ENCODE measurements at regions of chr5 and their contacts with region 1.

Region 1: DNA sequence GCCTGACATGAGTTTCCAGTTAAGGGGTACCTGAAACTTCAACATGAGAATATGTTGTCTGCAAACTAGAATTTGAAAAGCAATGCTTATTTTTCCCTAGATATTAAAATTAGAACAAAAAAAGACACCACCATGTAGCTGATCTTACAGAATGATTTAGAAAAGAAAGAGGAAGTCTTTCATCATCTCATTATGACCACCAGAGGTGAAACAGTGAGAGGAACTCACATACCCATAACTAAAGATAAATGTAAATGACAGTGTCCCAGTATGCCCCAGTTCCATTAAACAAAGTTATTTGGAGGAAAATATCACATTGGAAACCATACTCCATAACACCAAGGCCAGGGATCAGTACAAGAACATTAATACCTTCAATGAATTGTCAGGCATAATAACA is 6.9 kb downstream of the TAF7 start:
- DNase-seq: no peak
- ATAC-seq: no peak
- H3K4me3 ChIP-seq: no peak overlapping the region
- H3K27ac ChIP-seq: no peak overlapping the region
- H3K4me1 ChIP-seq: peaks cover 0 to 8% (median 0%) of the 10 kb centered on the region in 9 donors
- H3K27me3 ChIP-seq: no peaks in the 10 kb centered on the region
- CTCF ChIP-seq: no peak

Region 2: GRCh38 chr5:141001854-141002604 is 311.7 kb before region 1 on chr5:
- intact Hi-C with region 1: no loop called
- DNase-seq: no peak
- ATAC-seq: peak in 2 of 8 donors; percentile 34 to 44
- H3K4me3 ChIP-seq: peak overlapping the region in 6 of 10 donors; percentile 24 to 42 (median 36)
- H3K27ac ChIP-seq: no peak overlapping the region
- H3K4me1 ChIP-seq: peaks cover 0 to 12% (median 5%) of the 10 kb centered on the region in 9 donors
- H3K27me3 ChIP-seq: peaks cover 0 to 65% (median 41%) of the 10 kb centered on the region in 7 donors
- CTCF ChIP-seq: no peak

Region 3: DNA sequence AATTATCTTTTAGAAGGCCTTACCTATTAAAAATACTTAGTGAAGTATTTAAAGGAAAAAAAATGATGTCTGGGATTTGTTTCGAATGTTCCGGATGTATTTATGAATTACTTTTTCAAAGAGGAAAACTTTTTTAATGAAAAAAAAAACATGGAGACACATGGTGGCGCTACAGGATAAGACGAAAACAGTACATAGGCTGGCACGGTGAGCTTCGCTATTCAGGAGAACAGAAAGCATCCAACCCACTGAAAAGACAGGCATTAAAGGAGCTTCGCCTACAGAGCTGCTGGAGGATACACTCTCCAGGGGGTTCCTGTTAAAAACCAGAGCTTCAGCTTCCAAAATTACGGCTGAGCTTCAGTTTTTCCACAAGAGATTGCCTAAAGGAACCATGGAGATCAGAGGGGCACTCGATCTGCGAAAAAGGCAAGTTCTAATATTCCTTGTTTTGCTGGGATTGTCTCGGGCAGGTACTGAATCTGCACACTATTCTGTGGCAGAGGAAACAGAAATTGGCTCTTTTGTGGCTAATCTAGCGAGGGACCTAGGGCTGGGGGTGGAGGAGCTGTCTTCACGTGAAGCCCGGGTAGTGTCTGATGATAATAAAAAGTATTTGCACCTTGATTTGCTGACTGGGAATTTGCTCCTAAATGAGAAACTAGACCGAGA is 90.5 kb before region 1 on chr5 and contains the start of gene PCDHB14:
- intact Hi-C with region 1: loop called in 1 of 10 experiments (anchors 10 kb)
- DNase-seq: no peak
- ATAC-seq: peak in 1 of 8 donors; percentile 65
- H3K4me3 ChIP-seq: peak within 1 kb of the TSS in 7 of 10 donors; percentile 12 to 40 (median 29)
- H3K27ac ChIP-seq: no peak within 1 kb of the TSS
- H3K4me1 ChIP-seq: no peaks in the 10 kb centered on the region
- H3K27me3 ChIP-seq: peaks cover 0 to 13% (median 0%) of the 10 kb centered on the region in 7 donors
- CTCF ChIP-seq: peak in 6 of 9 donors; percentile 15 to 43 (median 26)
- total RNA-seq, gene PCDHB14: 1.4 to 9.0 (median 4.2) TPM

Region 4: GRCh38 chr5:141250576-141250975 is 63.1 kb before region 1 on chr5:
- intact Hi-C with region 1: loop called in 2 of 10 experiments (anchors 5 to 10 kb)
- DNase-seq: no peak
- ATAC-seq: no peak
- H3K4me3 ChIP-seq: no peak overlapping the region
- H3K27ac ChIP-seq: no peak overlapping the region
- H3K4me1 ChIP-seq: no peaks in the 10 kb centered on the region
- H3K27me3 ChIP-seq: no peaks in the 10 kb centered on the region
- CTCF ChIP-seq: no peak